GM13977 (cell line): ENCODE measurements at regions of chr11 and their contacts with region 1.

Region 1: GRCh38 chr11:35138943-35139721 is at the start of gene CD44:
- DNase-seq: peak; percentile 75
- CTCF ChIP-seq: no peak

Region 2: GRCh38 chr11:34105079-34105956 is 1033.8 kb before region 1 on chr11 and contains the start of gene NAT10:
- in situ Hi-C with region 1: no loop called
- DNase-seq: peak; percentile 89
- CTCF ChIP-seq: no peak

Region 3: DNA sequence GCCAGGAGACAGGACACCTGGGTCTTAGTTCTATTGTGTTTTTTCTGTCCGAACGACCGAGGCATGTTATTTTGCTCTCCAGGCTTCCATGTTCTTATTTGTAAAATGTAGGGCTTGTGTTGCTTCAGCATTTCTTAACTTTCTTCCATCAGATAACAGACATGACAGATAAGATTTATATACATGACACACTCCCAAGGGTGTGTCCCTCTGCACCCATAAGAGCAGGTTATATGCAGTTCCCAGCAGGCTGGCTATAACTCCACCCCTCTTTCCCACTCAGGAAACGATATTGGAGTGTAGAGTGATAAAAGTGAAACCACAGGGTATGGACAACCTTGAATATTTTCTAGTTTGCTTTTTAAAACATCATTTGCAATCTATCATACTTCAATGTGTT is 288.8 kb before region 1 on chr11:
- in situ Hi-C with region 1: no loop called
- DNase-seq: no peak
- CTCF ChIP-seq: no peak

Region 4: DNA sequence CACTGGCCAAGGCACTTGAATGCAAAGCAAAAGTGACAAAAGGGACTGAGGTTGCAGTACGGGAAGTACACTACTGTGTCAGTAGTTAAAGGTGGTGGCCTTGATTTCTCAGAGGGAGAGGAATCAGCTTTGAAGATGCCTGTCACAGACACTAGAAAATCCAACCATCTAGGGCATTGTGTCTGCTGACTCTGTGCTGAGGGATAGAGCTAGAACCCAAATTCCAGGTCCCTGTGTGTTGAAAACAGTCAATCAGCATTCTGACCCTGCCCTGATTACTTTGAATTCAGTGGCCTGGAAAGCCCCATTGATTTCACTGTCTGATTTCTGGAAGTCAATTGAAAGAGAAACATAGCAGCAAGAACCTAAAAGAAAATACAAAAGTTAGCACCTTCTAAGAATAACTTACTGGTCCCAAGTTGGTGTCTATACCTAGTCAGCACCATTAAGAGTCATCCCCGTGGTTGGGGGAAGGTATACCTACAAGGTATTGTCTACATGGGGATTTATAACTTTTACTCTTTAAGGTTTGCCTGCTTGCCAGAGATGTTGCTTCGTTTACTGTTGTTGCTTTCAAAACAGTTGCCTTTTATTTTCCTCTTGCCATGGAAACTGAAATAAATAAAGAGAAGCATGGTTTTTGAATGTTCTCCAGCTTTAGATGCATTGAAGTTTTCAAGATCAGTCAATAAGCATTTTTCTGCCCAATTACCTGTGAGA is 125.5 kb before region 1 on chr11:
- in situ Hi-C with region 1: loop called (anchors 10 kb)
- DNase-seq: no peak
- CTCF ChIP-seq: no peak

Region 5: GRCh38 chr11:35272391-35272902 is 133.3 kb after region 1 on chr11:
- in situ Hi-C with region 1: no loop called
- DNase-seq: peak; percentile 56
- CTCF ChIP-seq: no peak